ENCODE measurements at regions of chr3 and their contacts with region 1.

Region 1: GRCh38 chr3:50536471-50537180 is 30.9 kb downstream of the C3orf18 start:
- DNase-seq: no peak
- ATAC-seq: no peak
- H3K4me3 ChIP-seq: no peak overlapping the region
- H3K27ac ChIP-seq: no peak overlapping the region
- H3K4me1 ChIP-seq: no peaks in the 10 kb centered on the region
- H3K27me3 ChIP-seq: no peaks in the 10 kb centered on the region
- CTCF ChIP-seq: no peak

Region 2: DNA sequence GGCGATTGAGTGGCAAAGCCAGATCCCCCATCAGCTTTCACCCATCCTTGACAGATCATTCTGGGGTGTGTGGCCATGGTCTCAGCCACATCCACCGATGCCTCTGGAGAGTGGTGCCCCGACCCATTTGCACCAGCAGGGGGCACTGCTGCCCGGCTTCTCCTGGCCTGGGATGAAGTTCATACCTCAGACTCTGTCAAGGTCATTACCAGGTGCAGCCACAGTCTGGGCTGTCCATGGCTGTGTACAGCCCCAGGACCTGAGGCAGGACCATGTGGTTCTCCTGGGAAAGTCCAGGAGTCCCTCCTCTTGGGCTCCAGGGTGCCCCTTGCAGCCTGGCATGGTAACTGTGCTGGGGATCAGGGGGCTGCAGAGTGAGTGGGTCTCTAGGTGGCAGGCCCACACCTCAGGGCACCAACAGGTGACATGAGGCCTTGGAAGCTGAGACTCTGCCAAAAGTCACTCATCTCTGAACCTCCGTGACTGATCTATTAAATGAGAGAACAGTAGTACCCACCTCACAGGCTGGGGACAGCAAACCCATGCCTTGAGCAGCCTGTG is 100.4 kb before region 1 on chr3:
- intact Hi-C with region 1: loop called in 2 of 3 experiments (anchors 5 to 10 kb)
- DNase-seq: peak; percentile 69 to 94 (median 84)
- ATAC-seq: peak; percentile 94 to 99 (median 96)
- H3K4me3 ChIP-seq: no peak overlapping the region
- H3K27ac ChIP-seq: no peak overlapping the region
- H3K4me1 ChIP-seq: no peaks in the 10 kb centered on the region
- H3K27me3 ChIP-seq: no peaks in the 10 kb centered on the region
- CTCF ChIP-seq: peak; percentile 88 to 97 (median 89)